Heart left ventricle (tissue), 16 donors: ENCODE measurements at regions of chr20 and their contacts with region 1.

Region 1: DNA sequence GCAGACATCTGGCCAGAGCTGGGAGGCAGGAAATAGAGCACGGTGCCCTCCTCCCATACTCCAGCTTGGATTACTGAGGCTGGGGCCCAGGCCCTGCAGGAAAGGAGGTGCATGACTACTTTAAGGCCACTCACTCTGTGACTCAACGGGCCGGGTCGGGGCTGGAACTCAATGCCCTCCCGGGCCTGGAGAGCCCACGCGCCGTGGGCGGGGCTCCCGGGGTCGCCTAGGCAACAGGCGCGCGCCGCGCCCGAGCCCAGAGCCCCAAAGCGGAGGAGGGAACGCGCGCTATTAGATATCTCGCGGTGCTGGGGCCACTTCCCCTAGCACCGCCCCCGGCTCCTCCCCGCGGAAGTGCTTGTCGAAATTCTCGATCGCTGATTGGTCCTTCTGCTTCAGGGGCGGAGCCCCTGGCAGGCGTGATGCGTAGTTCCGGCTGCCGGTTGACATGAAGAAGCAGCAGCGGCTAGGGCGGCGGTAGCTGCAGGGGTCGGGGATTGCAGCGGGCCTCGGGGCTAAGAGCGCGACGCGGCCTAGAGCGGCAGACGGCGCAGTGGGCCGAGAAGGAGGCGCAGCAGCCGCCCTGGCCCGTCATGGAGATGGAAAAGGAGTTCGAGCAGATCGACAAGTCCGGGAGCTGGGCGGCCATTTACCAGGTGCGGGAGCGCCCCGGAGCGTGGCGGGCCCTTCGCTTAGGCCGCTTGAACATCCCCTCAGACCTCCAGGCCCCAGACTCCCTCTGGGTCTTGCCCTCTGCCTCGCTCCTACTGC is at the start of gene PTPN1:
- DNase-seq: peak; percentile 99
- ATAC-seq: peak; percentile 96 to 98 (median 98)
- H3K4me3 ChIP-seq: peak within 1 kb of the TSS; percentile 71 to 100 (median 98)
- H3K27ac ChIP-seq: peak within 1 kb of the TSS; percentile 80 to 96 (median 92)
- H3K4me1 ChIP-seq: peaks cover 0 to 55% (median 41%) of the 10 kb centered on the region in 12 donors
- H3K27me3 ChIP-seq: no peaks in the 10 kb centered on the region
- CTCF ChIP-seq: peak in 2 of 12 donors; percentile 10 to 14
- POLR2A ChIP-seq: peak; percentile 97 to 99
- total RNA-seq, gene PTPN1: 24.2 to 63.3 (median 32.0) TPM

Region 2: DNA sequence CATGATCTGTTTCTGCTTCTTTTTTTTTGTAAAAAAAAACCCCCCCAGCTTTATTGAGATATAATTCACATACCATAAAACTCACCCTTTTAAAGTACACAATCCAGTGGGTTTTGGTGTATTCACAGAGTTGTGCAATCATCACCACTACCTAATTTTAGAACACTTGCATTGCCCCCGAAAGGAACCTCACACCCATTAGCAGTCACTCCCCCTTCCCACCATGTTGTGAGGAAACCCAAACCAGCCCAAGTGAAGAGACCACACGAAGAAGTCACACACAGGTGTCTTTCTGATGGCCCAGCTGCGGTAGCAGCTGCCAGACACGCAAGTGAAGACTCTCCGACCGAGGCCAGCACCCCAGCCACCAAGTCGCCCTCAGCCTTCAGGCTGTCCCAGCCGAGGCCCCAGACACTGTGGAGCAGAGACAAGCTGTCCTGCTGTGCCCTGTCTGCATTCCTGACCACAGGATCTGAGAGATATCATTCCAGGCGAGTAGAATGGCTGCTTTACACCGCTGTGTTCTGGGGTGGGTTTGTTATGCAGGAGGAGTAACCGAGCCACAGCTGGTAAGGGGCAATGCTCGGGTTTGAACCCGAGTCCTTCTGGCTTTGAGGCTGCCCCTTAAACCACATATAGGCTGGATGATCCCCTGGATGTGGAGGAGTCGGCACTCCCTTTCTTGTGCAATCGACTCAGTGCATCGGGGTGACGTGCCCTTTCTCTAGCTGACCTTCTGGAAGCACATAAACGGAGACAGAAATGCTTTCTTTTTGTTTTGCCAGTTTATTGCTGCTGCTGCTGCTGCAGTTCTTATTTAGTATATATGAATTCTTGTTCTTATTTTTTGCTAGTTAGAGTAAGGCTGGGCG is 59.0 kb before region 1 on chr20:
- intact Hi-C with region 1: no loop called
- DNase-seq: peak in 2 of 5 donors; percentile 50 to 61
- ATAC-seq: peak; percentile 62 to 80 (median 66)
- H3K4me3 ChIP-seq: peak overlapping the region in 11 of 12 donors; percentile 1 to 44 (median 33)
- H3K27ac ChIP-seq: peak overlapping the region in 11 of 12 donors; percentile 9 to 75 (median 66)
- H3K4me1 ChIP-seq: peaks cover 0 to 46% (median 11%) of the 10 kb centered on the region in 12 donors
- H3K27me3 ChIP-seq: no peaks in the 10 kb centered on the region
- CTCF ChIP-seq: no peak
- POLR2A ChIP-seq: peak in 1 of 2 donors; percentile 29

Region 3: DNA sequence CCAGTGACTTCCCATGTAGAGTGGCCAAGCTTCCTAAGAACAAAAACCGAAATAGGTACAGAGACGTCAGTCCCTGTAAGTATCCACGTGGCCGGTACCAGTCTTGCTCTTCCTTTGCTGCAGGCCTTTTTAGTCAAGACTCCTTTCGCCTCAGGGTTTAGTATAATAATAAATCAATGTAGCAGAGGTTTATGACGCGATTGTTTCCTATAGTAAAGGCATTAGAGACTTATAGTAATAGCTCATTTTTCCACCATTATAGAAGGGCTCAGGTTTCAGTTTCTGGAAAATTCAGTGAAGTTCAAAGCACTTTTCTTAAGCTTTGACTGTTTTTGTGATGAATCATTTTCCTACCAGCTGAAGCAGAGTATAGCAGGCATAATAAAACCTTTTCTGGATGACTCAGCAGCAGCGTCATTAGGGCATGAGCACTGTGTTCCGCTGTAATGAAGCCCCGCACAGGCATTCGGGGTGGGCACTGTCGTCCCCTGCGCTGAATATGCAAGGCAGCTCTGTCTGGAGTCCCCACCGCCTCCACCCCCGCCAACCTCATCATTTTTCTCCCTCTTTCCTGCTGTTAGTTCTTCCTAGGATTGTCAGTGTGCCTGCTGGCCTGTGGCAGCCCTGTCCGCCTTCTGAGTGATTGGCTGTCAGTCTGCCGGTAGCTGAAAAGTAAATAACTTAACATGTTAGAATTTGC is 51.4 kb after region 1 on chr20:
- intact Hi-C with region 1: loop called in 1 of 10 experiments (anchors 5 kb)
- DNase-seq: no peak
- ATAC-seq: peak in 2 of 4 donors; percentile 7 to 9
- H3K4me3 ChIP-seq: no peak overlapping the region
- H3K27ac ChIP-seq: peak overlapping the region in 5 of 12 donors; percentile 11 to 77 (median 50)
- H3K4me1 ChIP-seq: peaks cover 0 to 70% (median 25%) of the 10 kb centered on the region in 12 donors
- H3K27me3 ChIP-seq: no peaks in the 10 kb centered on the region
- CTCF ChIP-seq: no peak
- POLR2A ChIP-seq: no peak

Region 4: DNA sequence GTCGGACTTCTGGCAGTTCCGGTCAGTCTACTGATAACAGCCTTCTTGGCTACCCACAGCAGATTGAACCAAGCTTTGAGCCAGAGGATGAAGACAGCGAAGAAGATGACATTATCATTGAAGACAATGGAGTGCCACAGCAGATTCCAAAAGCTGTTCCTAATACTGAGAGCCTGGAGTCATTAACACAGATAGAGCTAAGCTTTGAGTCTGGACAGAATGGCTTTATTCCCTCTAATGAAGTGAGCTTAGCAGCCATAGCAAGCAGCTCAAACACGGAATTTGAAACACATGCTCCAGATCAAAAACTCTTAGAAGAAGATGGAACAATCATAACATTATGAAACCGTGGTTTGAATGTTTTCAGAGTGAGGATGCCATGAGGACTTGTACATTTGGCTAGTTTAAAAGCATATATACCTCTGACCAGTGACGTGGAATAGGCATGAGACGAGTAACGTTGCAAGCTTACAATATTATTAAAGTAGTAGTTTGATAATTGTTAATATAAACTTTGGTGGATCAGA is 240.1 kb after region 1 on chr20:
- intact Hi-C with region 1: no loop called
- DNase-seq: no peak
- ATAC-seq: peak in 1 of 4 donors; percentile 9
- H3K4me3 ChIP-seq: no peak overlapping the region
- H3K27ac ChIP-seq: no peak overlapping the region
- H3K4me1 ChIP-seq: peaks cover 0 to 26% (median 8%) of the 10 kb centered on the region in 12 donors
- H3K27me3 ChIP-seq: no peaks in the 10 kb centered on the region
- CTCF ChIP-seq: no peak
- POLR2A ChIP-seq: no peak

Region 5: GRCh38 chr20:50794846-50795634 is 284.9 kb after region 1 on chr20 and contains the start of gene BCAS4:
- intact Hi-C with region 1: no loop called
- DNase-seq: peak; percentile 58 to 84 (median 65)
- ATAC-seq: peak; percentile 39 to 87 (median 66)
- H3K4me3 ChIP-seq: peak within 1 kb of the TSS; percentile 53 to 87 (median 78)
- H3K27ac ChIP-seq: peak within 1 kb of the TSS in 4 of 12 donors; percentile 34 to 74 (median 54)
- H3K4me1 ChIP-seq: peaks cover 0 to 34% (median 17%) of the 10 kb centered on the region in 12 donors
- H3K27me3 ChIP-seq: peaks cover 0 to 6% (median 0%) of the 10 kb centered on the region in 9 donors
- CTCF ChIP-seq: peak in 11 of 12 donors; percentile 63 to 99 (median 80)
- POLR2A ChIP-seq: no peak
- total RNA-seq, gene BCAS4: 1.7 to 5.1 (median 2.1) TPM